ENCODE measurements at regions of chr16 and their contacts with region 1.

Region 1: GRCh38 chr16:720990-721764 is at the start of gene ANTKMT:
- DNase-seq: peak; percentile 77
- H3K4me3 Mint-ChIP-seq: peak within 1 kb of the TSS; percentile 62
- H3K27ac Mint-ChIP-seq: no peak within 1 kb of the TSS
- H3K4me1 Mint-ChIP-seq: peaks cover 16% of the 10 kb centered on the region
- H3K27me3 Mint-ChIP-seq: peaks cover 6% of the 10 kb centered on the region
- total RNA-seq, gene ANTKMT: 8.4 to 9.3 TPM

Region 2: DNA sequence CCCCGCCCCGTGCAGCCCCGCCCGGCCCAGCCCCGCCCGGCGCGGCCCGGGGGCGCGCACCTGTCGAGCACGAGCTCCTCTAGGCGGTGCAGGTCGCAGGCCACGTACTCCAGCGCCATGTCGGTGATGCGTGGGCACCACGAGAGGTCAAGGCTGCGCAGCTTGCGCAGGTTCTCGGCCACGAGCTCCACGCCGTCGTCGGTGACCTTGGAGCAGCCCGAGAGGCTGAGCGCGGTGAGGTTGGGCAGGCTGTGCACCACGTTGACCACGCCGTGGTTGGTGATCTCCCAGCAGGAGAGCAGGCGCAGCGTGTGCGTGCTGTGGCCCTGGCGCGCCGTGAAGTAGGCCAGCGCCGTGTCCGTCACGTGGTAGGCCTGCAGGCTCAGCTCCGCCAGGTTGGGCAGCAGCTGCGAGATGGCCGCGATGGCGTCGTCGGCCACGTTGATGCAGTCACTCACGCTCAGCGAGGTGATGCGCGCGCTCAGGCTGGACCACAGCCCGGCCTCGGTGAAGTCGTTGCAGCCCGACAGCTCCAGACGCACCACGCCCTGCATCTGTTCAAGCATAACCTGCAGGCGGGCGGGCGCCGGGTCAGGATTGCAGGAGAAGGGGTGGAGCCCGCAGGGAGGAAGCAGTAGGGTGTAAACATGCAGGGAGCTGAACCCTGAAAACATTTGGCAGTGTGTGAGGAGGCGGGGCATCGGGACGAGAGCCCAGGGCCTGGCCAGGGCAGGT is 25.7 kb before region 1 on chr16:
- CTCF ChIA-PET with region 1: interaction called, 3 read pairs
- POLR2A ChIA-PET with region 1: interaction called, 19 read pairs
- DNase-seq: peak; percentile 81
- H3K4me3 Mint-ChIP-seq: peak overlapping the region; percentile 79
- H3K27ac Mint-ChIP-seq: peak overlapping the region; percentile 92
- H3K4me1 Mint-ChIP-seq: peaks cover 57% of the 10 kb centered on the region
- H3K27me3 Mint-ChIP-seq: peaks cover 8% of the 10 kb centered on the region

Region 3: DNA sequence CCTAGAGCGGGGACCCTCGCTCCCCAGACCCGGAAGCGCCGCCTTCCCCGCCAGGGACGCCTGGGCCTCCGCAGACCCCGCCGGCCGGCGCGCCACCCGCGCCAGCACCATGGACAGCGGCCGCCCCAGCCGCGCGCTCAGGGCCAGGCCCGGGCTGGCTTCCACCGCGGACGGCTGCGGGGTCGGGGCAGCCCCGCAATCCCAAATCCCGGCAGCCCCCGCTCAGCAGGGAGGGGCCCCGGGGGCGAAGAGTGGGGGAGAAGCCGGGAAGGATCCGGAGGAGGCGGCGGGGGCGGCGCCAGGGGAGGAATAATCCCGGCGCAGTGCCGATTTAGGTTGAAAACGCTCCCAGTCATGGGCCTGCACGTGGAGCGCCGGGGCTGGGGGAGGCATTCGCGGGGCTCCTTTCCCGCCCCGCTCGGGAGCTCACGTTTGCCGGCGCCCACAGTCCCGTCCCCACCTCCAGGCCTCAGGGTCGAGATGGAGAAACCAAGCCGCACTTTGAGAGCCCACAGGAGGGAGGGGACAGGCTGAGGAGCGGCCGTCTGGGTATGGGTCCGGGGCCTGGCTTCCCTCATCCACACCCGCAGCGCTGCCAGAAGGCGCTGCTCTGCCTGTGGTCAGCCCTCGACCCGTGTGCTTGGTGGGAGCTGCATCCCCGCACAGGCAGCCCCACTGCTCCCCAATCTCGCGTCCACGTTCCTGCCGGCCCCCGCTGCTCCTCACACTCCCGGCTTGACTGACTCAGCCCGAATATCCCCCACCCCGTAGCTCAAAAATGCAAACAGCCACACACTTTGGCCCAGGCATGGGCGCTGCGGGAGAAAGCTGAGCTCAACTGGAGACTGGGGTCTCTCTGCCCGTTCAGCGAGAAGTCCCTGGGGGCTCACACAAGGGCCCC is 20.2 kb before region 1 on chr16:
- CTCF ChIA-PET with region 1: interaction called, 6 read pairs
- POLR2A ChIA-PET with region 1: interaction called, 19 read pairs
- DNase-seq: peak; percentile 60
- H3K4me3 Mint-ChIP-seq: no peak overlapping the region
- H3K27ac Mint-ChIP-seq: no peak overlapping the region
- H3K4me1 Mint-ChIP-seq: peaks cover 35% of the 10 kb centered on the region
- H3K27me3 Mint-ChIP-seq: peaks cover 31% of the 10 kb centered on the region

Region 4: GRCh38 chr16:740764-741505 is 19.8 kb after region 1 on chr16 and contains the start of gene CIAO3:
- CTCF ChIA-PET with region 1: interaction called, 8 read pairs
- POLR2A ChIA-PET with region 1: interaction called, 10 read pairs
- DNase-seq: peak; percentile 94
- H3K4me3 Mint-ChIP-seq: peak within 1 kb of the TSS; percentile 77
- H3K27ac Mint-ChIP-seq: peak within 1 kb of the TSS; percentile 65
- H3K4me1 Mint-ChIP-seq: peaks cover 27% of the 10 kb centered on the region
- H3K27me3 Mint-ChIP-seq: no peaks in the 10 kb centered on the region
- total RNA-seq, gene CIAO3: 34.0 to 34.8 TPM

Region 5: DNA sequence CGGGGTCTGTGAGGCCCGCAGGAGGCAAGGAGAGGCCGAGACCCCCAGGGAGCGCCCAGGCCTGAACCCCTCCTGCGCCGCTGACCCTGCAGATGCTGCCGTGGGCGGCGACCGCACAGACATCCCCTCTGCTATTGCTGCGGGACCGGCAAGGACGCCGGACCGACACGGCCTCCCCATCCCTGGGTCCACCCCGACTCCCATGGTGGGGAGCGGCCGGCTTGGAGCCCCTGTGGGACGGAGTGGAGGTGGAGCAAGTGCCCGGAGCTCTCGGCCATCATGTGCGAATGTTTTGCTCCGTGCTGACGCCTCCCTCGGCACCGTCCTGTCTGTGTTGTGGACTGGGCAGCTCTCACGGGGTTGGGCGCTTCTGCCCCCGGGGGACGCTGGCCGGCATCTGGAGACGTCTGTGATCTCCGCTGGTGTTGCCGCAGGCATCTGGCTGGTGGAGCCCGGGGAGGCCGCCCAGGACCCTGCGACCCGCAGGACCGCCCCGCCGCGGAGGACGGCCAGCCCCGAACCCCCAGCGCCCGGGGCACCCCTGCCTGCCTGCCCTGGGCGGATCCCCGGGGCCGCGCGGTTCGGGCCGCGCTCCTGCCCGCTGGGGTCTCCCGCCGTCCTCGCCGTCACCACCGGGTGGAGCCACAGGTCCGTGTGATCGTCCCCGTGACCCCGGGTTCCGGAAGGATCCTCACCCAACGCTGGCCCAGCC is 92.2 kb after region 1 on chr16:
- CTCF ChIA-PET with region 1: no interaction called
- POLR2A ChIA-PET with region 1: no interaction called
- DNase-seq: peak; percentile 45
- H3K4me3 Mint-ChIP-seq: no peak overlapping the region
- H3K27ac Mint-ChIP-seq: no peak overlapping the region
- H3K4me1 Mint-ChIP-seq: peaks cover 4% of the 10 kb centered on the region
- H3K27me3 Mint-ChIP-seq: peaks cover 28% of the 10 kb centered on the region

Region 6: GRCh38 chr16:920717-921116 is 199.5 kb after region 1 on chr16:
- CTCF ChIA-PET with region 1: no interaction called
- POLR2A ChIA-PET with region 1: no interaction called
- DNase-seq: no peak
- H3K4me3 Mint-ChIP-seq: no peak overlapping the region
- H3K27ac Mint-ChIP-seq: no peak overlapping the region
- H3K4me1 Mint-ChIP-seq: no peaks in the 10 kb centered on the region
- H3K27me3 Mint-ChIP-seq: no peaks in the 10 kb centered on the region

Measured in activated CD4-positive, alpha-beta memory T cell treated with anti-CD3 and anti-CD28 coated beads, Interleukin-2, amount 10 ng/mL, durations not matched to agents 7 days and 5 days (primary cell).